WTC11 (cell line): ENCODE measurements at regions of chr19 and their contacts with region 1.

Region 1: GRCh38 chr19:33771384-33772101 is 25.1 kb upstream of the KCTD15 start:
- DNase-seq: peak; percentile 81
- ATAC-seq: peak; percentile 71
- H3K4me3 Mint-ChIP-seq: no peak overlapping the region
- H3K27ac Mint-ChIP-seq: no peak overlapping the region
- H3K4me1 Mint-ChIP-seq: no peaks in the 10 kb centered on the region
- H3K27me3 Mint-ChIP-seq: no peaks in the 10 kb centered on the region; the same call in 1 of the 2 replicates
- CTCF ChIP-seq: peak; percentile 91

Region 2: DNA sequence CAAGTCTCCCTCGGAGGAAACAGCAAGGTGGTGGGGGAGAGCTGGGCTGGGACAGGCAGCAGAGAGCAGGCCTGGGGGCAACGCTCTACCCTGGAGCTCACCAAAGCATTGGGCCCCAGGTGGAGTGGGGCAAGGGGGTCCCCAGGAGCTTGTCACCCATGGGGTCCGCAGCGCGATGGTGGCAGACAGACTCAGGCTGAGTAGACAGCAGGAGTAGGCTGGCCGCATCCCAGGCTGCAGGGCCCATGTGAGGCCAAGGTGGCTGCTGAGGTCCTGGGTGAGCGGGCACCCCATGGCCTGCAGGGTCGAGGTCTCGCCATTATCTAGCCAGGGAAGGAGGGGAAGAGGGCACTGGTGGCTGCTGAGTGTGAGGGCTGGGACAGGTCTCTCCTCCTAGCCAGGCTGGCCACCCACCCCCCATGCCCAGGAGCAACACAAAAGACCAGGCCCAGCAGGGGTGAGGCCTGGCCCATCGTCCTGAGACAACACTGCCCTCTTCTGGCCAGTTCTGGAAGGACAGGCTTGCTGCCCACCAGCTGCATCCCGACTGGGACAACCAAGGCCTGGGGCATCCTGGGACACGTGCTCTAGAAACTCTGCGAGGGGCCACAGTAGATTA is 364.9 kb before region 1 on chr19:
- CTCF ChIA-PET with region 1: interaction called, 17 read pairs
- POLR2A ChIA-PET with region 1: no interaction called
- DNase-seq: peak; percentile 92
- ATAC-seq: peak; percentile 86
- H3K4me3 Mint-ChIP-seq: no peak overlapping the region
- H3K27ac Mint-ChIP-seq: peak overlapping the region; percentile 53; the same call in 1 of the 2 replicates
- H3K4me1 Mint-ChIP-seq: peaks cover 4% of the 10 kb centered on the region; the same call in 1 of the 2 replicates
- H3K27me3 Mint-ChIP-seq: no peaks in the 10 kb centered on the region
- CTCF ChIP-seq: peak; percentile 98

Region 3: GRCh38 chr19:33416307-33417215 is 355.0 kb before region 1 on chr19:
- CTCF ChIA-PET with region 1: interaction called, 40 read pairs
- POLR2A ChIA-PET with region 1: no interaction called
- DNase-seq: peak; percentile 87
- ATAC-seq: peak; percentile 81
- H3K4me3 Mint-ChIP-seq: peak overlapping the region; percentile 63
- H3K27ac Mint-ChIP-seq: no peak overlapping the region; the same call in 1 of the 2 replicates
- H3K4me1 Mint-ChIP-seq: peaks cover 11% of the 10 kb centered on the region
- H3K27me3 Mint-ChIP-seq: no peaks in the 10 kb centered on the region
- CTCF ChIP-seq: peak; percentile 74

Region 4: DNA sequence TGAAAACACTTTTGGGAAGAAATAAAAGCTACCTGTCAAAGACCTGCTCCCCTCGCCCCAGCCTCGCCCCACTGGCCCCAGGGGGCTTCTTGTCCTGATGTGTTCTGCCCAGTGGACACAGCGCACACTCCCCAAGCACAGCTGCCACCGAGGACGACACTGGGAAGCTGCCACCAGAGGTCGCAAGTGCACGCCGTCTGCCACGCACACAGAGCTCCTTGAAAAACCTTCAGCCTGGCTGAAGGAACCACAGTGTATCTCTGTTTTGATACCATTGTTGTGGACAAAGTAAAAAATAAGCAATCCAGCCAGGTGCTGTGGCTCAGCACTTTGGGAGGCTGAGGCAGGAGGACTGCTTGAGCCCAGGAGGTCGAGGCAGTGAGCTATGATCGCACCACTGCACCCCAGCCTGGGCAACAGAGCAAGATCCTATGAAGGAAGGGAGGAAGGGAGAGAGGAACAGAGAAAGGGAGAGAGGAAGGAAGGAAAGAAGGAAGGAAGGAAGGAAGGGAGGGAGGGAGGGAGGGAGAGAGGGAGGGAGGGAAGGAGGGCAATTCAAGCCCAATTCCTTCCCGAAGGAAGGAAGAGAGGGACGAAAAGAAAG is 340.8 kb before region 1 on chr19:
- CTCF ChIA-PET with region 1: interaction called, 70 read pairs
- POLR2A ChIA-PET with region 1: no interaction called
- DNase-seq: peak; percentile 81
- ATAC-seq: peak; percentile 81
- H3K4me3 Mint-ChIP-seq: no peak overlapping the region
- H3K27ac Mint-ChIP-seq: peak overlapping the region; percentile 44
- H3K4me1 Mint-ChIP-seq: no peaks in the 10 kb centered on the region
- H3K27me3 Mint-ChIP-seq: no peaks in the 10 kb centered on the region
- CTCF ChIP-seq: peak; percentile 66

Region 5: GRCh38 chr19:33541834-33542472 is 229.6 kb before region 1 on chr19:
- CTCF ChIA-PET with region 1: interaction called, 11 read pairs
- POLR2A ChIA-PET with region 1: no interaction called
- DNase-seq: no peak
- ATAC-seq: no peak
- H3K4me3 Mint-ChIP-seq: no peak overlapping the region
- H3K27ac Mint-ChIP-seq: no peak overlapping the region
- H3K4me1 Mint-ChIP-seq: peaks cover 3% of the 10 kb centered on the region; the same call in 1 of the 2 replicates
- H3K27me3 Mint-ChIP-seq: peaks cover 4% of the 10 kb centered on the region; the same call in 1 of the 2 replicates
- CTCF ChIP-seq: no peak

Region 6: DNA sequence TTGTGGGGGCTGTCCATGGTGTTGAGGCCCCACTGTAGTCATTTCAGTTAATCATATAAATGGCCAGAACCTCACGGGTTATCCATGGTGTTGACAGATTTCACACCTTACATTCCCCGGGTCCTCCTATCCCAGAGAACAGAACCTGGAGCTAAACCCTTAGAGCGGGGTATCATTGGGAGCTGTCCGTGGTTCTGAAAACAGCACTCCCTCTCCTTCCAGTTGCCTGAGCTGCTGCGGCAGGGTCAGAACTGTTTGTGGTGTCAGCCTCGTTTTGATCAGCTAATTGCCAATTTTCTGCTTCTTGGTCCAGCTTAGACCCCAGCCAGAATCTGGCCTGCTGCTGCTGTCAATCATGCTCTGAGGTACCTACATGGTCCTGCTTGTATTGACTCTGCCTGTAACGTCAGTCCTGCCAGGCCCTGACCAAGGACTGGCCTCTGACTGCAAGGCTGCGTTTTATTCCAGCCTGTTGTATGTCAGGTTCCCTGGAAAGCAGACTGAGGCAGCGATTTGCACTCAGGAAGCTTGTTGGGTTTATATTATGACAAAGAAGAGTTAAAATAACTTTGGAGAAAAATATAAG is 30.6 kb before region 1 on chr19:
- CTCF ChIA-PET with region 1: interaction called, 10 read pairs
- POLR2A ChIA-PET with region 1: no interaction called
- DNase-seq: peak; percentile 81
- ATAC-seq: peak; percentile 79
- H3K4me3 Mint-ChIP-seq: no peak overlapping the region
- H3K27ac Mint-ChIP-seq: no peak overlapping the region
- H3K4me1 Mint-ChIP-seq: peaks cover 13% of the 10 kb centered on the region
- H3K27me3 Mint-ChIP-seq: no peaks in the 10 kb centered on the region; the same call in 1 of the 2 replicates
- CTCF ChIP-seq: no peak